Activated CD4-positive, alpha-beta memory T cell treated with anti-CD3 and anti-CD28 coated beads for 36 hours (primary cell): ENCODE measurements at regions of chr10 and their contacts with region 1.

Region 1: GRCh38 chr10:101441541-101442455 is 87.8 kb downstream of the BTRC start:
- DNase-seq: peak; percentile 12
- H3K4me3 Mint-ChIP-seq: no peak overlapping the region
- H3K27ac Mint-ChIP-seq: no peak overlapping the region
- H3K4me1 Mint-ChIP-seq: peaks cover 8% of the 10 kb centered on the region
- H3K27me3 Mint-ChIP-seq: no peaks in the 10 kb centered on the region

Region 2: GRCh38 chr10:101291331-101292193 is 150.2 kb before region 1 on chr10:
- CTCF ChIA-PET with region 1: interaction called, 23 read pairs
- POLR2A ChIA-PET with region 1: no interaction called
- intact Hi-C with region 1: no loop called
- DNase-seq: peak; percentile 58
- H3K4me3 Mint-ChIP-seq: peak overlapping the region; percentile 66
- H3K27ac Mint-ChIP-seq: no peak overlapping the region
- H3K4me1 Mint-ChIP-seq: peaks cover 5% of the 10 kb centered on the region
- H3K27me3 Mint-ChIP-seq: peaks cover 65% of the 10 kb centered on the region

Region 3: GRCh38 chr10:101353692-101354327 is 88.0 kb before region 1 on chr10 and contains the start of gene BTRC:
- CTCF ChIA-PET with region 1: interaction called, 10 read pairs
- POLR2A ChIA-PET with region 1: no interaction called
- intact Hi-C with region 1: no loop called
- DNase-seq: peak; percentile 98
- H3K4me3 Mint-ChIP-seq: peak within 1 kb of the TSS; percentile 95
- H3K27ac Mint-ChIP-seq: peak within 1 kb of the TSS; percentile 92
- H3K4me1 Mint-ChIP-seq: peaks cover 28% of the 10 kb centered on the region
- H3K27me3 Mint-ChIP-seq: peaks cover 9% of the 10 kb centered on the region
- total RNA-seq, gene BTRC: 18.2 to 18.6 TPM

Region 4: DNA sequence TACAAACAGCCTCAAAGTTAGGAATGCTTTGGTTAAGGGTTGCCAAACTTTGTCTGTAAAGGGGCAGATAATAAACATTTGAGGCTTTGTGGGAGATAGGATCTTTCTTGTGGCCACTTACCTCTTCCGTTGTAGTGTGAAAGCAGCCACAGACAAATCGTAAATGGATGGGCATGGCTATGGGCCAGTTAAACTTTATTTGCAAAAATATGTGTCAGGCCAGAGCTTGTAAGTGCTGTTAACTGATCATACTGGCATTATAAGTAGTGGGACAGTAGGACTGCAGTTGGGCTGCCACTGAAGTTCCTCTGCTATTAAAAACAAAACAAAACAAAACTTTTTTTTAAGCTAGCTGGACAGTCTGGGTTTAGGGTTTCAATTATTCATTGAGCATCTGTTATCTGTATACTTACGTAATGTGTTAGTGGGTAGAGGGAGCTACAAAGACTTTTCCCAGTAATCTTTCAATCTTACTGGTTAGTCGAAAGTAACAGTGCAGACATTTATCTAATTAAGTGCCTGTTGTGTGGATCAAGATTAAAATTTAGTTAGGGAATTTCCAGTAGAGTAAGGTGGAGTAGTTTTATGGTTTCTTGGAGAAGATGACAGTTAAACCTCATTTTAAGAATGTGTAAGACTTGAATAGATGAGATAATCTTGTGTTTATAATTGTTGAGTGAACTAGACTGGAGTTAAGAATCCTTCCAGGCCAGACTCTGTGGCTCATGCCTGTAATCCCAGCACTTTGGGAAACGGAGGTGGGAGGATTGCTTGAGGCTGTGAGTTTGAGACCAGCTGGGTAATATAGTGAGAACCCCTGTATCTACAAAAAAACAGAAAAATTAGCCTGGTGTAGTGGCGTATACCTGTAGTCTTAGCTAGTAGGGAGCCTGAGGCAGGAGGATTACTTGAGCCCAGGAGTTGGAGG is 12.3 kb after region 1 on chr10:
- CTCF ChIA-PET with region 1: interaction called, 21 read pairs
- POLR2A ChIA-PET with region 1: no interaction called
- intact Hi-C with region 1: no loop called
- DNase-seq: no peak
- H3K4me3 Mint-ChIP-seq: no peak overlapping the region
- H3K27ac Mint-ChIP-seq: no peak overlapping the region
- H3K4me1 Mint-ChIP-seq: peaks cover 27% of the 10 kb centered on the region
- H3K27me3 Mint-ChIP-seq: no peaks in the 10 kb centered on the region

Region 5: GRCh38 chr10:101478956-101479355 is 37.2 kb after region 1 on chr10:
- CTCF ChIA-PET with region 1: no interaction called
- POLR2A ChIA-PET with region 1: no interaction called
- intact Hi-C with region 1: no loop called
- DNase-seq: no peak
- H3K4me3 Mint-ChIP-seq: no peak overlapping the region
- H3K27ac Mint-ChIP-seq: no peak overlapping the region
- H3K4me1 Mint-ChIP-seq: no peaks in the 10 kb centered on the region
- H3K27me3 Mint-ChIP-seq: no peaks in the 10 kb centered on the region